ENCODE measurements at regions of chr1 and their contacts with region 1.

Region 1: DNA sequence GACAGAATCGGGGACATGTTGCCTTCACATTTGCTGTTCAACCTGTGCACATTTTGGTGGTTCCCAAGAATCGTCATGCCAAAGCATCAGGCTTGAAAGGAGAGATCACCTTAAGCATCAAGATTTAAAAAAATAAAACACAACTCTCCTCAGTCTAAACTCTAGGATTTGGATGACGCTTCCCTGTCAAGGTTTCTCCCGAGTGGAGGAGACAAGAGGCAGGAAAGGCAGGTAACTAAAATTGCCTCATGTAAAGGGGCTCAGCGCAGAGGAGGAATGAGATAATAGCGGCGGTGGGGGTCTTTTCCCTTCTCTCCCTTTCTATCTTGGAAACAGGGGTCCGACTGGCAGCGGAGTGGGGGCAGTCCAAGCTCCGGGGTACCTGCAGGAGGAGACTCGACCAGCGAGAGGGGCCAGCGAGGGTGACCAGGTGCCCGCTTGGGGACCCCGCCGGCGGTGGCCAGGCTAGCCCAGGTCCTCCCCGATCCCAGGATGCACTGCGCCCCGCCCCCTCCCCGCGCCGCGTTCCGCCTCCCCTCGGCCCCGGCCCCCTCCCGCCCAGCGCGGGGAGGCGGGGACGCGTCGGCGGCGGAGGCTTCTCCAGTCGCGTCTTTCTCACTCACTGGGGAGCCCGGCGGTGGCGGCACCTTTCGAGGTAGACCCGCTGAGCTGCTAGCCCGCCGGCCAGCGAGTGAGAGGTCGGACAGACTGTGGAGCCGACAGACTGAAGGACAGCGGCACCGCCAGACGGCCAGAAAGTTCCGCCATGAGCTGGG is at the start of gene FNBP1L:
- DNase-seq: peak; percentile 80
- H3K4me3 Mint-ChIP-seq: peak within 1 kb of the TSS; percentile 100
- H3K27ac Mint-ChIP-seq: peak within 1 kb of the TSS; percentile 95
- H3K4me1 Mint-ChIP-seq: peaks cover 27% of the 10 kb centered on the region
- H3K27me3 Mint-ChIP-seq: no peaks in the 10 kb centered on the region
- CTCF ChIP-seq: no peak
- total RNA-seq, gene FNBP1L: 30.7 and 31.8 TPM in 2 replicates

Region 2: DNA sequence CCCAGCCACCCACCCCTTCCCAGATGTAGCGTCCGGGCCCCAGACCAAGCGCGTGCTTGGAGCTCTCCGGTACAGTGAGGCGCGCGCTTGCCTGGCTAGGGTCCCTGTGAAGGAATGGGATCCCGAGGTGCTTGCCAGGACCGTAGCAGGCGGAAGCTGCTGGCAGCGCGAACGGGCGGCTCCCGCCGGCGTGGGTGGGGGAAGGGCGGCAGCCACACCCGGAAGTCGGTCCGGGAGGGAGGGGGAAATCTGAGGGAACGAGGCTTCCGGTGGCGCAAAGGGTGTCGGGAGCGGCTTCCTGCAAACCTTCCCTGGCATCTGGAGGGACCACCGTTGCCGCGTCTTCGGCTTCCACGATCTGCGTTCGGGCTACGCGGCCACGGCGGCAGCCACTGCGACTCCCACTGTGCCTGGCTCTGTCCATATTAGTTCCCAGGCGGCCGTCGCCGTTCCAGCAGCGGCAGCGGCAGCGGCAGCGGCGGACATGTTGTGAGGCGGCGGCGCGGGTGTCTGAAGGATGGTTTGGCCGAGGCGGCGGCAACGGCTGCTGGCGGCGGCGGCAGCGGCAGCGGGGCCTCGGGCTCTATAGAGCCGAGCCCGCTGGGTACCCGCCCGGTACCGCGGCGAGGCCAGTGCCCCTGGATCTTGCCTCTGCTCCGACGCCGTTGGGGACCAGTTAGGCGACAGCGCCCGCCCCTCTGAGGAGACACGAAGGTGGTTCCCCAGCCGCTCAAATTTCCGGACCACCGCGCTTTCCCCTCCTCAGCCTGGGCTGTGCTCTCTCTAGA is 101.9 kb before region 1 on chr1 and contains the start of gene DR1:
- CTCF ChIA-PET with region 1: no interaction called
- POLR2A ChIA-PET with region 1: interaction called, 28 read pairs
- intact Hi-C with region 1: no loop called
- DNase-seq: peak; percentile 92
- H3K4me3 Mint-ChIP-seq: peak within 1 kb of the TSS; percentile 98
- H3K27ac Mint-ChIP-seq: peak within 1 kb of the TSS; percentile 98
- H3K4me1 Mint-ChIP-seq: peaks cover 5% of the 10 kb centered on the region
- H3K27me3 Mint-ChIP-seq: no peaks in the 10 kb centered on the region
- CTCF ChIP-seq: no peak
- total RNA-seq, gene DR1: 103 and 104 TPM in 2 replicates

Region 3: GRCh38 chr1:93384656-93385055 is 63.0 kb before region 1 on chr1:
- CTCF ChIA-PET with region 1: no interaction called
- POLR2A ChIA-PET with region 1: no interaction called
- intact Hi-C with region 1: no loop called
- DNase-seq: no peak
- H3K4me3 Mint-ChIP-seq: no peak overlapping the region
- H3K27ac Mint-ChIP-seq: no peak overlapping the region
- H3K4me1 Mint-ChIP-seq: no peaks in the 10 kb centered on the region
- H3K27me3 Mint-ChIP-seq: no peaks in the 10 kb centered on the region
- CTCF ChIP-seq: no peak

Region 4: DNA sequence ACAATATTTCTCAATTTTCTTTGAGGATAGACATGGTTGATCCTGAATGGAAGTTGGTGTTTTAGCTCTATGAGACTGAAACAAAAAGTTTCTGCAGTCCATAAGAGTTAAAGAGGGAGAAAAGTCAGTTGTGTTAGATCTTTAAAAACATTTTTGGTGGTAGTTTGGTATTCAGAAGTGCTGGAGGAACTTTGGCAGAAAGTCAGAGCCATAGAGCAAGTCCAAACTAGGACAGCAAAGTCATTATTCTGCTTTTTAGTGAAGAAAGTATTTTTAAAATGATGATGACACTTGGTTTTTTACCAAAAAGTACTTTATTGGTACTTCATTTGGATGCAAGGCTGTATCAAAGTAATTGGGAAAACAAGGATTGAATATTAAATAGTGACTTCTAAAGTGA is 42.1 kb after region 1 on chr1:
- CTCF ChIA-PET with region 1: no interaction called
- POLR2A ChIA-PET with region 1: no interaction called
- intact Hi-C with region 1: no loop called
- DNase-seq: no peak
- H3K4me3 Mint-ChIP-seq: no peak overlapping the region
- H3K27ac Mint-ChIP-seq: no peak overlapping the region
- H3K4me1 Mint-ChIP-seq: peaks cover 20% of the 10 kb centered on the region
- H3K27me3 Mint-ChIP-seq: no peaks in the 10 kb centered on the region
- CTCF ChIP-seq: no peak

Region 5: DNA sequence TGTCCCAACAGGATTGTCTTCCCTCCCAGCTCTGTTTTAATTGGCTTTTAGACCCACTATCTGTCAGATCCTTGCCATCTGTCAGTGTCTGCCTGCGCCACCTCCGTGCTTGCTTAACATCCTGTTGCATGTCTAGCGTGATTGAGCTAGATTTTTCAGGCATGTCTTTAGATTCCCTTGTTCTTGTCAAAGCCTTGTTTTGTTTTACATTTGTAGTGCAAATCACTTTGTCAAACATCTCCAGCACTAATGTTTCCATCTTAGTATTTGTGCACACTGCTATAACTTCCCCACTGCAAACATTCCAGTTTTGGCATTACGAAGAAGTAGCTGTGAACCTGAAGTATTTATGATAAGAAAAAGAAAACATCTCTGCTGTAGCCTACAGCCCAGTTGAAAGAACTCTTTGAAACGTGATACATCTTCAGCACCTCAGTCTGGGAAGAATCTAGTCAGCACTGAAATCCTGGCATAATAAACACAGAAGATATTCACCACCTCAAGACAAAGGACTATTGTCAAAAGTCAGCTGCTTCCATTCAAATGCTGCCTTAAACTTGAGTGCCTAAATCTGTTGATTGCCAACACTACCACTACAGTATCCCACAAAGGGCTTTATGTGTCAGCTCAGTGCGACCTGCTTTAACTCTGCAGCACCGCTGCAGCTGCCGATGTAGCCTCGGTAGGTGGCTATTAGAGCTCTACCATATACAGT is 105.2 kb after region 1 on chr1:
- CTCF ChIA-PET with region 1: interaction called, 8 read pairs
- POLR2A ChIA-PET with region 1: interaction called, 47 read pairs
- intact Hi-C with region 1: loop called (anchors 1 kb)
- DNase-seq: peak; percentile 80
- H3K4me3 Mint-ChIP-seq: peak overlapping the region; percentile 32
- H3K27ac Mint-ChIP-seq: peak overlapping the region; percentile 62
- H3K4me1 Mint-ChIP-seq: peaks cover 50% of the 10 kb centered on the region
- H3K27me3 Mint-ChIP-seq: no peaks in the 10 kb centered on the region
- CTCF ChIP-seq: no peak

Region 6: DNA sequence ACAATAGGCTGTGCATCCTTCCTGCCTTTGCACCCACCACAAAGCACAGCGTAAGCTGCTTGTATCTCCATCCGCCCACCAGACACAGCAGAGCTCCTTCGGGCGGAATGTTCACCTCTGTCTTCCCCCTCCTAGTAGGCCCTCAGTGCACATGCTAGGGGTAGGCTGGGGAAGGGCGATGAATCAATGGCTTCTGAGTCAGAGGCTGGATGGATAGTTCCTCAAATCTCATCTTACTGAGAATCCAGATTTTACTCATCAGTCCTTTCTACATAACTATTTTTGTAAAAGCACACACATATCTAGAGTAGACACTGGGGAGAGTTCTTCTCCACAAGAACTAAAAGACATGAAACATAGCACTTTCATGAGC is 160.1 kb after region 1 on chr1:
- CTCF ChIA-PET with region 1: interaction called, 5 read pairs
- POLR2A ChIA-PET with region 1: interaction called, 16 read pairs
- intact Hi-C with region 1: no loop called
- DNase-seq: no peak
- H3K4me3 Mint-ChIP-seq: no peak overlapping the region
- H3K27ac Mint-ChIP-seq: peak overlapping the region; percentile 85
- H3K4me1 Mint-ChIP-seq: peaks cover 57% of the 10 kb centered on the region
- H3K27me3 Mint-ChIP-seq: no peaks in the 10 kb centered on the region
- CTCF ChIP-seq: no peak

Region 7: GRCh38 chr1:93623875-93624274 is 176.2 kb after region 1 on chr1:
- CTCF ChIA-PET with region 1: interaction called, 7 read pairs
- POLR2A ChIA-PET with region 1: interaction called, 19 read pairs
- intact Hi-C with region 1: no loop called
- DNase-seq: peak; percentile 55
- H3K4me3 Mint-ChIP-seq: no peak overlapping the region
- H3K27ac Mint-ChIP-seq: peak overlapping the region; percentile 88
- H3K4me1 Mint-ChIP-seq: peaks cover 58% of the 10 kb centered on the region
- H3K27me3 Mint-ChIP-seq: no peaks in the 10 kb centered on the region
- CTCF ChIP-seq: no peak